Panc1 (cell line): ENCODE measurements at regions of chr5 and their contacts with region 1.

Region 1: GRCh38 chr5:87267574-87268125 is at the start of gene RASA1:
- DNase-seq: no peak
- ATAC-seq: peak; percentile 92
- H3K4me3 ChIP-seq: peak within 1 kb of the TSS; percentile 78 to 95
- H3K27ac ChIP-seq: peak within 1 kb of the TSS; percentile 89
- H3K4me1 ChIP-seq: peaks cover 8% of the 10 kb centered on the region
- H3K27me3 ChIP-seq: peaks cover 3% of the 10 kb centered on the region; the same call in 1 of the 2 replicates
- CTCF ChIP-seq: no peak
- total RNA-seq, gene RASA1: 29.0 TPM

Region 2: DNA sequence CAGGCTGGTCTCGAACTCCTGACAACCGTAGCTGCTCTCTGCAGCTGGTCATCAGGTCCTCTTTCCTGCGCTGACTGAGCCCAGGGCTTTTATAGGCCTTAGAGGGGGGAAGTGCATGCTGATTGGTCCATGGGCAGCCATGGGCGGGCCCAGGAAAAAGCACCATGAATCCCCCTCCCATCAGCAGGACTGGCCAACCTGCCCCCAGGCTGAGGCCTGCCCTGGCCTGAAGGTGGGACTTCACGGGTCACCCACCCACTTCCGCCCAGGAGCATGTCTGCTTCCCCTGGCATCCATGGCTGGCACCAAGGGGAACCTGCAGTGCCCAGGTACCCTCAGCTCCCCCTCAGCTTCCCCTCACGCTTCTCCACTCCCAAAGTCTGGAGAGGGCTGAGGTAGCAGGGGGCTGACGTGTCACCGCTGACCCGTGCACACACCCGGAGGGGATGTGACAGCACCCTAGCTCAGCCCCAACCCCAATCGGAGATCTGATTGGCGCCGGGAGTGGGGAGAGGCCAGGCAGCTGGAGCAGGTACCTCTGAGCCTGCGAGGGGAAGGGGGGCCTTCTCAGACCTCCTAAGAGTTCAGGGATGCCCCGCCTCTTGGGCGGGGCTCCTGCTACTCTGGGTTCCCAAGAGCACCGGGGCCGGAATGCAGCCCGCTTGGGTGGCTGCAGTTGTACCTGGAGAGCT is 15.9 kb before region 1 on chr5:
- CTCF ChIA-PET with region 1: interaction called, 3 read pairs
- POLR2A ChIA-PET with region 1: interaction called, 11 read pairs
- in situ Hi-C with region 1: no loop called
- intact Hi-C with region 1: no loop called
- DNase-seq: no peak
- ATAC-seq: no peak
- H3K4me3 ChIP-seq: no peak overlapping the region
- H3K27ac ChIP-seq: no peak overlapping the region
- H3K4me1 ChIP-seq: no peaks in the 10 kb centered on the region
- H3K27me3 ChIP-seq: no peaks in the 10 kb centered on the region; the same call in 1 of the 2 replicates
- CTCF ChIP-seq: no peak